Activated CD4-positive, alpha-beta T cell treated with anti-CD3 and anti-CD28 coated beads, Interleukin-2, amount 10 ng/mL, durations not matched to agents 7 days and 5 days (primary cell): ENCODE measurements at regions of chr5 and their contacts with region 1.

Region 1: DNA sequence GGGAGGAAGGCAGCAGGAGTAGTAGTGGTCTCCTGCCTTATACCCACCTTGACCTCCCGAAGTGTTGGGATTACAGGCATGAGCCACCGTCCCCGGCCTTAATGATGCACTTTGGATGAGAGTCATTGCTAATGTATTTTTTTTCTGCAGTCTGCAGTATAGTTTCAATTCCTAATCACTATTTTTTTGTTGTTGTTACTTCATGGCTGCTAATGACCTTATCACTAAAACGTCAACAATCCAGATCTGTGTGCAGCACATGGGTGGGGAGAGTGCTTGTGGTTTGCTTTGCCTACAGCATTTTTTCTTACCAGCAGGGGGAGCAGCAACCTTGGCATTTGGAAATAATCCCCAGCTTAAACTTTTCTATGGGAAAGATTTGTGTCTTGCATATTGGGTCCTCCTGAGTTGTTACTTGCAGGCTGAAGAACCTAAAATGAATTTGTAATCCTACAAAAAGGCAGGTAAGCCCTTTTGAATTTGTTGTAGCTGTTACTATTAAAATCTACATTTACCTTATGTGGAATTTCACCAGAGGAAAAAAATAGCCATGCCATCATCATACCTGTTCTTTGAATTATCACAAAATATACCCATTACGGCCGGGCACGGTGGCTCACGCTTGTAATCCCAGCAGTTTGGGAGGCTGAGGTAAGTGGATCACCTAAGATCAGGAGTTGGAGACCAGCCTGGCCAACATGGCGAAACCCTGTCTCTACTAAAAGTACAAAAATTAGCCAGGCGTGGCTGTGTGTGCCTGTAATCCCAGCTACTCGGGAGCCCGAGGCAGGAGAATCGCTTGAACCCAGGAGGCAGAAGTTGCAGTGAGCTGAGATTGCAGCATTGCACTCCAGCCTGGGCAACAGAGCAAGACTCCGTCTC is 6.3 kb upstream of the MED7 start:
- DNase-seq: peak; percentile 91
- H3K4me3 Mint-ChIP-seq: no peak overlapping the region
- H3K27ac Mint-ChIP-seq: peak overlapping the region; percentile 79
- H3K4me1 Mint-ChIP-seq: peaks cover 47% of the 10 kb centered on the region
- H3K27me3 Mint-ChIP-seq: no peaks in the 10 kb centered on the region

Region 2: DNA sequence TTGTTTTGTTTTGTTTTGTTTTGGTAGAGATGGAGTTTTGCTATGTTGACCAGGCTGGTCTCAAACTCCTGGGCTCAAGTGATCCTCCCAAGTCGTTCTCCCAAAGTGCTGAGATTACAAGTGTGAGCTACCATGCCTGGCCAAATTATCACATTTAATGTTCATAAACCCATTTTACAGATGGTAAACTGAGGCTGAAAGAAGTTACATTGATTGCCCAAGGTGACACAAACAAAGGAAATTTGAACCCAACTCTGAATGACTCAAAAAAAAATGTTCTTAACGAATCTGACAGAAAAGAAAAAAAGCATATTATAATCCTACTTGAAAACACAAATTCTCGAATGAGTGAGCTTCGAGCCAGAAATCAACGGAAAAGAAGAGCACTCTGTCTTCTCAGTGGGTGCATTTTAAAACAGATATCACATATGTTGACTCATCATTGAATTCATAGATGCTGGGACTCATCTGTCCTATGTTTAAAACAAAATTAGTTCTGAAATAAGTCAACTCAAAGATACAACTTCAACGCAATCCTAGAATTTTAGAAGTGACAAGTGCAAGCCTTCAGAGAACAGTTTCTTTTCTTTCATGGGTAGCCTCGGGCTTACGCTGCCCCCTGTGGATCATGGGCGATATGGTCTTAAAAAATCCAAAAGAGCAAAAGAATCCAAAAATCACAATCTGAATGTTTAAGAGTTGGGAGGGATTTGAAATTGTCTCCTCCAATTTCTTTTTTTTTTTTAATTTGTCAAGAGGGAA is 214.3 kb before region 1 on chr5:
- CTCF ChIA-PET with region 1: no interaction called
- POLR2A ChIA-PET with region 1: no interaction called
- DNase-seq: peak; percentile 76
- H3K4me3 Mint-ChIP-seq: no peak overlapping the region
- H3K27ac Mint-ChIP-seq: peak overlapping the region; percentile 74
- H3K4me1 Mint-ChIP-seq: peaks cover 50% of the 10 kb centered on the region
- H3K27me3 Mint-ChIP-seq: no peaks in the 10 kb centered on the region

Region 3: GRCh38 chr5:156971415-156971814 is 177.6 kb before region 1 on chr5:
- CTCF ChIA-PET with region 1: no interaction called
- POLR2A ChIA-PET with region 1: no interaction called
- DNase-seq: no peak
- H3K4me3 Mint-ChIP-seq: no peak overlapping the region
- H3K27ac Mint-ChIP-seq: no peak overlapping the region
- H3K4me1 Mint-ChIP-seq: no peaks in the 10 kb centered on the region
- H3K27me3 Mint-ChIP-seq: no peaks in the 10 kb centered on the region

Region 4: GRCh38 chr5:157167214-157167621 is 18.2 kb after region 1 on chr5:
- CTCF ChIA-PET with region 1: interaction called, 12 read pairs
- POLR2A ChIA-PET with region 1: interaction called, 6 read pairs
- DNase-seq: no peak
- H3K4me3 Mint-ChIP-seq: peak overlapping the region; percentile 39
- H3K27ac Mint-ChIP-seq: peak overlapping the region; percentile 83
- H3K4me1 Mint-ChIP-seq: peaks cover 76% of the 10 kb centered on the region
- H3K27me3 Mint-ChIP-seq: no peaks in the 10 kb centered on the region

Region 5: DNA sequence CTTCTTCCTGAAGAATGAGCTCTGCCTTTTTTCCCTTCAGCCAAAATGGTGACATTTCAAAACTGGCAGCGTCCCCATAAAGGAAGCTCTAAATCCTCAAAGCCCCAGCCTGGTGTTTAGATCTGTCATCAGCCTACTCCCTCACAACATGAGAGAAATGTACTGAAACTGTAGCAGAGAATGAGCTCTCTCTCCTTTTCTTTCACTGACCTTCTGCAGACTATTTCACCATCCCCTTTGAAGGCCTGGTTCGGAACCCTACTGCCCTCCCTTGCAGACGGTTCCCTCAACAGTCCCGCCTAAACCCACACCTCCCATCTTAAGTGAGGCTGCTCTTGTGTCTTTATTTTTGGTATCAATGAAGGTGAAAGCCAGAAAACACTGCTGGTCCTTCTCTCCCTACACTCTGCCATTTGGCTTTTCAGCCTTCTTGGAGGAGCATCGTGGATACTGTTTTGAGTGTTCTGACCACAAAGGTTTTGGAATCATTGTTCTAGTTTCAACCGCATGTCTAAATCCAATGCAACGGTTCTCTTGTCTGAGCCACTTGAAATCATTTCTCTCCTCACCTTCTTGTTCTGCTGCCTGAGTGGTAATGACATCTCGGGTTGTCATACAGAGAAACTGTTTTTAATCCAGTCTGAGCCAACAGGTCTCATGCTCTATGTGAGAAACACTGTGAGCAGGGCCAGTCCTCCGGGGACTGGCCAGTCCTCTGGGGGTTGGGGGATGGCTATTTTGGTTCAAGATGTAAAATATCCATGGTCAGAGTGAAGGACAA is 70.7 kb after region 1 on chr5:
- CTCF ChIA-PET with region 1: interaction called, 15 read pairs
- POLR2A ChIA-PET with region 1: interaction called, 3 read pairs
- DNase-seq: peak; percentile 42
- H3K4me3 Mint-ChIP-seq: peak overlapping the region; percentile 29
- H3K27ac Mint-ChIP-seq: peak overlapping the region; percentile 93
- H3K4me1 Mint-ChIP-seq: peaks cover 93% of the 10 kb centered on the region
- H3K27me3 Mint-ChIP-seq: no peaks in the 10 kb centered on the region

Region 6: GRCh38 chr5:157233515-157233914 is 84.5 kb after region 1 on chr5:
- CTCF ChIA-PET with region 1: no interaction called
- POLR2A ChIA-PET with region 1: interaction called, 10 read pairs
- DNase-seq: no peak
- H3K4me3 Mint-ChIP-seq: no peak overlapping the region
- H3K27ac Mint-ChIP-seq: peak overlapping the region; percentile 54
- H3K4me1 Mint-ChIP-seq: peaks cover 55% of the 10 kb centered on the region
- H3K27me3 Mint-ChIP-seq: no peaks in the 10 kb centered on the region